Activated B cell treated with CpG ODN at 0.5 μM for 24 hours (primary cell): ENCODE measurements at regions of chr12 and their contacts with region 1.

Region 1: GRCh38 chr12:101876861-101877815 is at the start of gene DRAM1:
- DNase-seq: peak; percentile 77
- ATAC-seq: peak; percentile 93
- H3K4me3 Mint-ChIP-seq: peak within 1 kb of the TSS; percentile 90
- H3K27ac Mint-ChIP-seq: peak within 1 kb of the TSS; percentile 75
- H3K4me1 Mint-ChIP-seq: peaks cover 19% of the 10 kb centered on the region
- H3K27me3 Mint-ChIP-seq: no peaks in the 10 kb centered on the region
- CTCF ChIP-seq: no peak
- total RNA-seq, gene DRAM1: 9.6 and 11.5 TPM in 2 replicates

Region 2: DNA sequence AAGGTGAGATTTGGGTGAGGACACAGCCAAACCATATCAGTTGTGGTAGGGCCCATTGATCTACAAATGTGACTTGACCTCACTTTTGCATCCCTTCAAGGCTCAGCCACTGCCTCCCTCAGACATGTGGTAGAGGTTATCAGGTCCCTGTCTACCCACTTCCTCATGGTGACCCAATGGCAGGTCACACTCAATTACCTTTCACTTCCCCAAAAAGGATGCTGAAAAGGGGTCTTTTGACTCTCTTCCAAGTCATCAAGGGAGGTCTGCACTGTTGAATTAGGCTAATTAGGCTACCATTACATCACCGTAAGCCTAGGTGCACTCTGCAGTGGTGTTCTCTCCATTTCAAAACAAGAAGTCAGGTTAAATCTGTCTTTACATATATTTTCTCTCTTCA is 22.4 kb before region 1 on chr12:
- CTCF ChIA-PET with region 1: no interaction called
- POLR2A ChIA-PET with region 1: interaction called, 5 read pairs
- intact Hi-C with region 1: loop called (anchors 1 kb)
- DNase-seq: no peak
- ATAC-seq: peak; percentile 87
- H3K4me3 Mint-ChIP-seq: peak overlapping the region; percentile 41
- H3K27ac Mint-ChIP-seq: peak overlapping the region; percentile 79
- H3K4me1 Mint-ChIP-seq: peaks cover 48% of the 10 kb centered on the region
- H3K27me3 Mint-ChIP-seq: no peaks in the 10 kb centered on the region
- CTCF ChIP-seq: no peak

Region 3: GRCh38 chr12:101909646-101910045 is 32.5 kb after region 1 on chr12:
- CTCF ChIA-PET with region 1: no interaction called
- POLR2A ChIA-PET with region 1: interaction called, 5 read pairs
- intact Hi-C with region 1: loop called (anchors 1 kb)
- DNase-seq: no peak
- ATAC-seq: peak; percentile 72
- H3K4me3 Mint-ChIP-seq: peak overlapping the region; percentile 65
- H3K27ac Mint-ChIP-seq: peak overlapping the region; percentile 46
- H3K4me1 Mint-ChIP-seq: peaks cover 44% of the 10 kb centered on the region
- H3K27me3 Mint-ChIP-seq: no peaks in the 10 kb centered on the region
- CTCF ChIP-seq: no peak

Region 4: GRCh38 chr12:102010265-102010994 is 133.3 kb after region 1 on chr12:
- CTCF ChIA-PET with region 1: no interaction called
- POLR2A ChIA-PET with region 1: interaction called, 3 read pairs
- intact Hi-C with region 1: loop called (anchors 2 kb)
- DNase-seq: peak; percentile 23
- ATAC-seq: peak; percentile 96
- H3K4me3 Mint-ChIP-seq: peak overlapping the region; percentile 63
- H3K27ac Mint-ChIP-seq: peak overlapping the region; percentile 96
- H3K4me1 Mint-ChIP-seq: peaks cover 33% of the 10 kb centered on the region
- H3K27me3 Mint-ChIP-seq: no peaks in the 10 kb centered on the region
- CTCF ChIP-seq: no peak

Region 5: DNA sequence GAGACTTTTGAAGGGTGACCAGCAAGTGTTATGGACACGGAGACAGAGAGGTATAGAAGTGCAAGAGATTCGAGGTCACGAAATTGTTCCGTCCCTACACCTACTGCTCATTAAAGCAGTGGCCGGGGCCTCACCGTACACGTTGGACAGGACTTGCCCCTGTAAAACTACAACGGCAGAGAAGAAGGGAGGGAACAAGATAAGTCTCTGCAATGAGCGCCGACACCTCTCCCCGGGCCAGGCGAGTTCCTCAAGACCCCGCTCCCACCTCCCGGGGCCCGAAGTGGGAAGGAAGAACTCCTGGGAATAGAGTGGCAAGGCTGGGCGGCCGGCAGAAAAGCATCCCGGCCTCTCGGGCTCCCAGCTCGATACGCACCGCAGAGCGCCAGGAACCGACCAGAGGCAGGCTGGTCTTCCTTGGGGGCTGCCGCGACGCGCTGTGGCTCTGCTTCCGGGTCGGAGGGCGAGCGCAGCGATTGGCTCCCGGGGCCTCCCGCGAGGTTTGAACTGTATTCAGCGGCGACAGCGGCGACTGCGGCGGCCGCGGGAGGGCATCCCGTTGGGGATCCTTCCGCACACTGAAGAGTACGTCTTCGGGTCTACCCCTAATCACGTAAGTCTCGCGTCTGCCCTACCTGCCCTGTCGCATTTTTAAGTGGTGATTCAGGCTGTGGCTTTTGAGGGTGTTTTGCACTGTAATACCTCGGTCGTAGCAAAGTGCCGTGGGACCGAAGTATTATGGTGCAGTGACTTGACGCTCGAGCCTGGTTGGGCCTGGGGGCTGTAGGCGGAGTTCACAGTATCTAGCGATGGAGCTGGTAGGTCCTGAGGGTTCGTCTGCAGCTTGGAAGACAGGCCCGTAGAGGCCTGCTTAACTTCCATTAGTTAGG is 242.8 kb after region 1 on chr12 and contains the starts of genes NUP37 and PARPBP:
- CTCF ChIA-PET with region 1: no interaction called
- POLR2A ChIA-PET with region 1: no interaction called
- intact Hi-C with region 1: loop called (anchors 1 kb)
- DNase-seq: peak; percentile 90
- ATAC-seq: peak; percentile 98
- H3K4me3 Mint-ChIP-seq: peak within 1 kb of the TSS; percentile 95
- H3K27ac Mint-ChIP-seq: peak within 1 kb of the TSS; percentile 91
- H3K4me1 Mint-ChIP-seq: peaks cover 12% of the 10 kb centered on the region
- H3K27me3 Mint-ChIP-seq: no peaks in the 10 kb centered on the region
- CTCF ChIP-seq: no peak
- total RNA-seq, gene NUP37: 27.0 and 29.9 TPM in 2 replicates
- total RNA-seq, gene PARPBP: 4.6 and 5.0 TPM in 2 replicates